Mammary epithelial cell (primary cell): ENCODE measurements at regions of chr1 and their contacts with region 1.

Region 1: GRCh38 chr1:19651141-19651737 is 7.1 kb downstream of the NBL1 start:
- DNase-seq: no peak
- H3K4me3 ChIP-seq: no peak overlapping the region
- H3K27ac ChIP-seq: peak overlapping the region; percentile 73
- H3K4me1 ChIP-seq: peaks cover 80% of the 10 kb centered on the region
- H3K27me3 ChIP-seq: no peaks in the 10 kb centered on the region
- CTCF ChIP-seq: peak; percentile 50 to 70

Region 2: DNA sequence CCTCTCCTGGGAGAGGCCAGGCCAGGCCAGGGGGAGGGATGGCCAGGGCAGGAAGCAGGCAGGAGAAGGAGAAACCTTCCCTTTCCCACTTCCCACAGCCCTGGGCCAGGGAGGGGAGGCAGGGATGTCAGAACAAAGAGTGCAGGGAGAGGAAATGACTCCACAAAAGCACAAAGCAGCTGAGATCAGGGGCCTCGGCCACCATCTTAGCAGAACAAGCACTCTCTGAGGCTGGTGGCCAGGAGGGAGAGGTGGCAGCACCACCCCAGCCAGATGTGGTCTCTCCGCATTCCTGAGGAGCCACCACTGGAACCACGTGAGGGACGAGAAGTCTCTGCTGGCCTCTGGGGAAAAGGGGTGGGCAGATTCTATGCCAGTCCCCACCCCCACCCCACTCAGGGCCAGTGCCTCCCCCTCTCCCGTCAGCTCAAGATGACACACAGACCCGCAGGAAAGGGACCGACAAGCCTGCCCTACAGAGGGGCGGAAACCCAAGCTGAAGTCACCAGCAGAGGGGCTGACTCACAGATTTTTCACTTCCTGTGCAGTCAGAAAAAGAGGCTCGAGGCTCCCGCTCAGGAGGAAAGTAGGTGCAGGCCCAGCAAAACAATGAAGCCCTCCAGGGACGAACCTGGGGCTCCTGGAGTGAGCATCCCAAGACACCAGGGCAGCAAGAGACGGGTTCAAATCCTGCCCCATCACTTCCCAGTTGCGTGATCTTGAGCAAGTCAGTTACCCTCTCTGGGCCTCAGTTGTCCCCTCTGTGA is 724.7 kb before region 1 on chr1:
- CTCF ChIA-PET with region 1: no interaction called
- dilution Hi-C with region 1: no loop called
- in situ Hi-C with region 1: no loop called
- intact Hi-C with region 1: loop called (anchors 10 kb)
- DNase-seq: peak; percentile 97
- H3K4me3 ChIP-seq: peak overlapping the region in 1 of 3 experiments; percentile 1
- H3K27ac ChIP-seq: peak overlapping the region; percentile 90
- H3K4me1 ChIP-seq: peaks cover 82% of the 10 kb centered on the region
- H3K27me3 ChIP-seq: no peaks in the 10 kb centered on the region
- CTCF ChIP-seq: no peak

Region 3: DNA sequence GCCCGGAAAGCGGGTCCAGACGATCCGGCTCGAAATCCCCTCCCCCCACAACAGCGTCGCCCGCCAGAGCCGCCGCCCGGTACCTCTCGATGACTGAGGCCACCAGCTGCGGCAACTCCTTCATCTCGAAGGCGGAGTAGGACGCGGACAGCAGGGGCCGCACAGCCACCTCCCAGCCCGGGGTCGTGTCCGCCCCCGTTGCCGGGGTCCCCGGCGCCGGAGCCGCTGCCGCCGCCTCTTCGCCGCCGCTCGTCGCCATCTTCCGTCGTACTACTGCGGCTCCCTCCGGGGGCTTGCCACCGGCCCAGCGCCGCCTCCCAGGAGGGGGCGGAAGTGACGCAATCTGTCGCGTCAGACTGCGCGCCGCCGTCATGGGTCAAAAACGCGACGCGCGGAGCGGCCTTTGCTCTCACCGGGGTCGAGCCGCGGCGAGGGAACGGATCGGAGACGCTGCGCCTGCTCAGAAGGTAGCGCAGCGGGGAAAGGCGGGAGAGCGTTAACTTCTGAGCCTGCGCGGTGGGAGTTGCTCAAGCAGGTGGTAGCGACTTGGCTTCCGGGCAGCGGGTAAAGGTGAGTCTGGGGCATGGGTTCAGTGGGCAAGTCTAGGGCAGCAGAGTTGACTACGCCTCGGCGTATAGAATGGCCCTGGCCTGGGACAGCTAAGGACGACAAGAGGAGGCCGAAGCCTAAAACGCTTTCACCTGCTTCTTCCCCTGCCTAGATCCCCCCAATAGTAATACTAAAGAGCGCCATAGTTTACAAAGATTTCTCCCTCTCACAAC is 441.1 kb before region 1 on chr1 and contains the start of gene UBR4:
- CTCF ChIA-PET with region 1: no interaction called
- dilution Hi-C with region 1: no loop called
- in situ Hi-C with region 1: no loop called
- intact Hi-C with region 1: loop called (anchors 10 kb)
- DNase-seq: peak; percentile 96
- H3K4me3 ChIP-seq: peak within 1 kb of the TSS; percentile 70 to 87 (median 73)
- H3K27ac ChIP-seq: peak within 1 kb of the TSS; percentile 71
- H3K4me1 ChIP-seq: peaks cover 19% of the 10 kb centered on the region
- H3K27me3 ChIP-seq: no peaks in the 10 kb centered on the region
- CTCF ChIP-seq: no peak
- total RNA-seq, gene UBR4: 128 to 158 TPM

Region 4: GRCh38 chr1:19341201-19342072 is 309.8 kb before region 1 on chr1:
- CTCF ChIA-PET with region 1: no interaction called
- dilution Hi-C with region 1: no loop called
- in situ Hi-C with region 1: loop called in 1 of 2 experiments (anchors 5 kb)
- intact Hi-C with region 1: loop called (anchors 1 kb)
- DNase-seq: peak; percentile 59
- H3K4me3 ChIP-seq: no peak overlapping the region
- H3K27ac ChIP-seq: no peak overlapping the region
- H3K4me1 ChIP-seq: peaks cover 8% of the 10 kb centered on the region
- H3K27me3 ChIP-seq: no peaks in the 10 kb centered on the region
- CTCF ChIP-seq: peak; percentile 89 to 90

Region 5: DNA sequence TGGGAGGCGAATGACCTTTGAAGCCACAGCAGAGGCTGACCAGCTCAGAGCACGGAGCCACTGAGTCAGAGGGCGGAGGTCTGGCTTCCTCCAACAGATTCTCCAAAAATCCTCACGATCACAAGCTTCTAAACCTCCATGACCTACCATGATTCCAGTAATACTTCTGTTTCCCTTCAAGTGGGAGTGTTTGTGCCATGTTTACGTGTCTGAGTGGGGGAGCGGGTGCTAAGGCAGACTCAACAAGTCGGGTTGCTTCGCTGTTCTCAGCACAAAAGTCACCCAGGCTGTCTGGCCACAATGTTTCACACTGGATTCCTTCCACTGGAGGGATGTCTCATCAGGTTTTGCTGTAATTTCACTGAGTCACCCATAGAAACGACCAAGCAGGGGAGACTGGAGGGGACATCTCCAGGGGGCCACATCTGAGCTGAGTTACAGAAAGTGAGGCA is 252.9 kb before region 1 on chr1:
- CTCF ChIA-PET with region 1: no interaction called
- dilution Hi-C with region 1: no loop called
- in situ Hi-C with region 1: loop called in 1 of 2 experiments (anchors 10 kb)
- intact Hi-C with region 1: loop called (anchors 1 kb)
- DNase-seq: peak; percentile 45
- H3K4me3 ChIP-seq: no peak overlapping the region
- H3K27ac ChIP-seq: no peak overlapping the region
- H3K4me1 ChIP-seq: peaks cover 17% of the 10 kb centered on the region
- H3K27me3 ChIP-seq: no peaks in the 10 kb centered on the region
- CTCF ChIP-seq: peak; percentile 21 to 30

Region 6: DNA sequence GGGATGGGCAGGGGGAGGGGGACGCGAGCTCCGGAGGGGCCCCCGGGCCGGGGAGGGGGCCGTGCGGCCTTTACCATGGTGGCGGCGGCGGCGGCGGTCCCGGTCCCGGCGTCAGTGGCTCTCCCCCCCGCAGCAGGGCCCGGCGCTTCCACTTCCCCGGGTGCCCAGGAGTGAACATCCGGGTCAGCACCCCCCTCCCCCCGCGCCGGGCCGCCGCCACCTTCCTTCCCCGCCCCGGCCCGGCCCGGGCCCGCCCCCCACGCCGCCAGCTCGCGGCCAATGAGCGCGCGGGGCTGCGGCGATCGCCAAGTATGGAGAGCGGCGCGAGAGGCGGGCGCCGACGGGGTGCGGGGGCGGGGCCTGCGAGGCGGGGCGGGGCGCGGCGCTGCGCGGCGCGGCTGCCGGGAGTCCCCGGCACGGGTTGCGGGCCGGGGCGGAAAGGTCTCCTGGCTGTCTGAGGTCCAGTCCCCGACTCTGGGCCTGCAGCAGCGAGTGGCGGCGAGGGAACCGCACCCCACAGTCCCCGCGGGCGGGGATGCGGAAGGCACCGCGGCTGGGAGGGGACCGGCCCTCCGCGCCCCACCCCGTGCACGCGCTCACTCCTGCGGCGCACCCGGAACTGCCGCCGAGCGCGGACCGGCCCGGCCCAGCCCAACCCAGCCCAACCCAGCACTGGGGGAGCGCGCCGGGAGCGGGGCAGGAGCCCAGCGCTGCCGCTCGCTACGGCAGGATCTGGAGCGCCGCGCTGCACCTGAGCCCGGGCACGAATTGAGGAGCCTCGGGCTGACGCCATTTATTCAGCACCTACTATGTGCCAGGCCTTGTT is 165.7 kb before region 1 on chr1 and contains the start of gene CAPZB:
- CTCF ChIA-PET with region 1: no interaction called
- dilution Hi-C with region 1: no loop called
- in situ Hi-C with region 1: loop called in 1 of 2 experiments (anchors 10 kb)
- intact Hi-C with region 1: loop called (anchors 1 kb)
- DNase-seq: peak; percentile 89
- H3K4me3 ChIP-seq: peak within 1 kb of the TSS; percentile 85 to 99 (median 92)
- H3K27ac ChIP-seq: peak within 1 kb of the TSS; percentile 84
- H3K4me1 ChIP-seq: peaks cover 30% of the 10 kb centered on the region
- H3K27me3 ChIP-seq: no peaks in the 10 kb centered on the region
- CTCF ChIP-seq: no peak
- total RNA-seq, gene CAPZB: 134 to 309 TPM

Region 7: GRCh38 chr1:19596714-19597495 is 54.3 kb before region 1 on chr1:
- CTCF ChIA-PET with region 1: no interaction called
- dilution Hi-C with region 1: no loop called
- in situ Hi-C with region 1: loop called in 1 of 2 experiments (anchors 5 kb)
- intact Hi-C with region 1: loop called (anchors 2 kb)
- DNase-seq: peak; percentile 97
- H3K4me3 ChIP-seq: peak overlapping the region; percentile 92 to 96 (median 95)
- H3K27ac ChIP-seq: peak overlapping the region; percentile 96
- H3K4me1 ChIP-seq: peaks cover 14% of the 10 kb centered on the region
- H3K27me3 ChIP-seq: no peaks in the 10 kb centered on the region
- CTCF ChIP-seq: no peak